ENCODE measurements at regions of chr4 and their contacts with region 1.

Region 1: GRCh38 chr4:48779998-48780742 is at the start of gene FRYL:
- DNase-seq: peak; percentile 87 to 99 (median 98)
- ATAC-seq: peak; percentile 92
- H3K4me3 ChIP-seq: peak within 1 kb of the TSS; percentile 80
- H3K4me3 Mint-ChIP-seq: peak within 1 kb of the TSS; percentile 76 to 96 (median 92)
- H3K27ac ChIP-seq: peak within 1 kb of the TSS; percentile 89
- H3K27ac Mint-ChIP-seq: peak within 1 kb of the TSS; percentile 76 to 96 (median 88)
- H3K4me1 ChIP-seq: peaks cover 18 to 23% of the 10 kb centered on the region in 2 donors
- H3K4me1 Mint-ChIP-seq: peaks cover 35 to 49% (median 46%) of the 10 kb centered on the region in 7 donors
- H3K27me3 ChIP-seq: no peaks in the 10 kb centered on the region
- H3K27me3 Mint-ChIP-seq: no peaks in the 10 kb centered on the region
- total RNA-seq, gene FRYL: 89.5 to 126 (median 112) TPM

Region 2: DNA sequence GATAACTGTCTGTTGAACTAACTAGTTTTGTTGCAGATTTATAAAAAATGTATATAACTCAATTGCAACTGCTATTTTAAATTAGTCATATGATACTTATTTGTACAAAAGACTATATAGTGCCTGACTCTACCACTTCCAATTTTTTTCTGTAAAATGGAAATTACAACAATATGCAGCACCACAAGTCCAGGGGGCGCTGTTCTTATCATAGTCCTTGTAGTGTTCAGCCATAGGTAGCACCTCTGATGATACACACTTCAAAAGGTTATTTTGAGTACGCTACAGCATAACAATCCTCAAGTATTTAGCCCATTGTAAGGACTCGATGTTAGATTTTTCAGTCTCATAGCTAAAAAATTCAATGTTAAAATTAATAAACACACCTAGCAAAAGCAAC is 1117.2 kb before region 1 on chr4:
- CTCF ChIA-PET with region 1: no interaction called
- POLR2A ChIA-PET with region 1: no interaction called
- intact Hi-C with region 1: no loop called
- DNase-seq: no peak
- ATAC-seq: no peak
- H3K4me3 ChIP-seq: no peak overlapping the region
- H3K4me3 Mint-ChIP-seq: no peak overlapping the region
- H3K27ac ChIP-seq: no peak overlapping the region
- H3K27ac Mint-ChIP-seq: no peak overlapping the region
- H3K4me1 ChIP-seq: no peaks in the 10 kb centered on the region
- H3K4me1 Mint-ChIP-seq: no peaks in the 10 kb centered on the region
- H3K27me3 ChIP-seq: no peaks in the 10 kb centered on the region
- H3K27me3 Mint-ChIP-seq: peaks cover 7 to 21% (median 17%) of the 10 kb centered on the region in 5 donors

Region 3: DNA sequence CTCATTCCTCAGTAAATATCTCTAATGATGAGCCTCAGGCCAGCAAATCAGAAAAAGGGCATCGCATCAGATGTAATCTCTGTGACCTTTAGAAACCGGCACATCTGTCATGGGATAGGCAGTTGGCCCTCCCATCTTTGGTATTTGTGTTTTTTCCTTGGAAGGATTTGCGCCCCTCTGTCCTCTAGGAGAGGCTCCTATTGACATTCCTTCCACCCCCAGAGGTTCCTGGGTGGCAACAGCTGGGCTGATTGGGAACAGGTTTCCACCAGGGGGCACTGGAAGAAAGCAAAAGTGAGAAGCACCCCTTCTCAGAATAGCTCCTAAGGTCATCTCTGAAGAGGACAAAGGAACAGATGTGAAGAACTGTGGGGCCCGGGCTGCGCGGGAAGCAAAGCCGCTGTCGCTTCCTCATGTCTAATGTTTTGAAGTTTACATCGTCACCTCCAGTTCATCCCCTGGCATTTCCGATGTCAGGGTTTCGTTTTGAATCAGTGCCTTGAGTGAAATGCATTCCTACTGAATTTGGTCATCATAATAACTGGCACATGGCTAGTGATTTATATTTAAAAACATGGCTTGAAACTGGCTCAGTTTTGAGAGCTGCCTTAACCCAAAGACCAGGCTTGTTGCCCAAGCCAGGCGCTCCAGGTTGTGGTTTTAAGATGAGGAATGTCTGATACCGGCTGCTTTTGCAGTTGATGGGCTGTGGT is 652.3 kb before region 1 on chr4:
- CTCF ChIA-PET with region 1: no interaction called
- POLR2A ChIA-PET with region 1: no interaction called
- intact Hi-C with region 1: loop called (anchors 2 kb)
- DNase-seq: peak; percentile 30 to 78 (median 71)
- ATAC-seq: peak; percentile 82
- H3K4me3 ChIP-seq: peak overlapping the region; percentile 52
- H3K4me3 Mint-ChIP-seq: peak overlapping the region in 9 of 10 donors; percentile 80 to 99 (median 91)
- H3K27ac ChIP-seq: peak overlapping the region; percentile 79
- H3K27ac Mint-ChIP-seq: peak overlapping the region in 7 of 9 donors; percentile 89 to 97 (median 95)
- H3K4me1 ChIP-seq: peaks cover 32 to 81% of the 10 kb centered on the region in 2 donors
- H3K4me1 Mint-ChIP-seq: peaks cover 0 to 89% (median 84%) of the 10 kb centered on the region in 7 donors
- H3K27me3 ChIP-seq: no peaks in the 10 kb centered on the region
- H3K27me3 Mint-ChIP-seq: no peaks in the 10 kb centered on the region

Region 4: DNA sequence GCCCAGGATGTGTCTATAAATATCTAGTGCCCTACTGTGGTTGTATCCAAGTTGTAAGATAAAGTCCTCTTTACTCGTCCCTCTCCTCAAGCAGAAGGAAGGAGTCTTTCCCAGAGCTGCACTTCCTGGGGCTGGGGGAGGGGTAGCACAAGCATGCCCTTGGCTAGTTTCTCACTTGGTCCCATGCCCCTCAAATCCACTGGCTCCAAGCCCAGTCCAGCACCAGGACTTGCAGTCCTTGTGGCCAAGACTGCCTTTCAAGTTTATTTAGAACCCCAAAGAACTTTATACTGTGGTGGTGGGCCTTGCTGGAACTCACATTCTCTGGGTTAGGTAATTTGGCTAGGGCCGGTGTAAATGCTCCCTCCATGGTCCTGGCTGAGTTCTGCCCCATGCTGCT is 340.2 kb before region 1 on chr4:
- CTCF ChIA-PET with region 1: no interaction called
- POLR2A ChIA-PET with region 1: no interaction called
- intact Hi-C with region 1: no loop called
- DNase-seq: no peak
- ATAC-seq: no peak
- H3K4me3 ChIP-seq: no peak overlapping the region
- H3K4me3 Mint-ChIP-seq: no peak overlapping the region
- H3K27ac ChIP-seq: no peak overlapping the region
- H3K27ac Mint-ChIP-seq: no peak overlapping the region
- H3K4me1 ChIP-seq: no peaks in the 10 kb centered on the region
- H3K4me1 Mint-ChIP-seq: peaks cover 0 to 4% (median 0%) of the 10 kb centered on the region in 7 donors
- H3K27me3 ChIP-seq: no peaks in the 10 kb centered on the region
- H3K27me3 Mint-ChIP-seq: peaks cover 3 to 15% (median 4%) of the 10 kb centered on the region in 5 donors

Region 5: GRCh38 chr4:48578132-48578968 is 201.8 kb before region 1 on chr4:
- CTCF ChIA-PET with region 1: interaction called, 23 read pairs
- POLR2A ChIA-PET with region 1: interaction called, 5 read pairs
- intact Hi-C with region 1: loop called (anchors 1 to 2 kb)
- DNase-seq: peak in 8 of 9 donors; percentile 29 to 66 (median 50)
- ATAC-seq: peak; percentile 95
- H3K4me3 ChIP-seq: no peak overlapping the region
- H3K4me3 Mint-ChIP-seq: no peak overlapping the region
- H3K27ac ChIP-seq: no peak overlapping the region
- H3K27ac Mint-ChIP-seq: peak overlapping the region in 6 of 9 donors; percentile 28 to 79 (median 52)
- H3K4me1 ChIP-seq: no peaks in the 10 kb centered on the region
- H3K4me1 Mint-ChIP-seq: peaks cover 0 to 7% (median 0%) of the 10 kb centered on the region in 7 donors
- H3K27me3 ChIP-seq: no peaks in the 10 kb centered on the region
- H3K27me3 Mint-ChIP-seq: no peaks in the 10 kb centered on the region

Region 6: GRCh38 chr4:48727666-48728459 is 52.3 kb before region 1 on chr4:
- CTCF ChIA-PET with region 1: no interaction called
- POLR2A ChIA-PET with region 1: interaction called, 4 read pairs
- intact Hi-C with region 1: loop called (anchors 2 kb)
- DNase-seq: no peak
- ATAC-seq: no peak
- H3K4me3 ChIP-seq: no peak overlapping the region
- H3K4me3 Mint-ChIP-seq: peak overlapping the region in 9 of 10 donors; percentile 2 to 79 (median 65)
- H3K27ac ChIP-seq: no peak overlapping the region
- H3K27ac Mint-ChIP-seq: peak overlapping the region in 8 of 9 donors; percentile 2 to 83 (median 27)
- H3K4me1 ChIP-seq: peaks cover 28 to 37% of the 10 kb centered on the region in 2 donors
- H3K4me1 Mint-ChIP-seq: peaks cover 71 to 96% (median 94%) of the 10 kb centered on the region in 7 donors
- H3K27me3 ChIP-seq: no peaks in the 10 kb centered on the region
- H3K27me3 Mint-ChIP-seq: no peaks in the 10 kb centered on the region

Region 7: DNA sequence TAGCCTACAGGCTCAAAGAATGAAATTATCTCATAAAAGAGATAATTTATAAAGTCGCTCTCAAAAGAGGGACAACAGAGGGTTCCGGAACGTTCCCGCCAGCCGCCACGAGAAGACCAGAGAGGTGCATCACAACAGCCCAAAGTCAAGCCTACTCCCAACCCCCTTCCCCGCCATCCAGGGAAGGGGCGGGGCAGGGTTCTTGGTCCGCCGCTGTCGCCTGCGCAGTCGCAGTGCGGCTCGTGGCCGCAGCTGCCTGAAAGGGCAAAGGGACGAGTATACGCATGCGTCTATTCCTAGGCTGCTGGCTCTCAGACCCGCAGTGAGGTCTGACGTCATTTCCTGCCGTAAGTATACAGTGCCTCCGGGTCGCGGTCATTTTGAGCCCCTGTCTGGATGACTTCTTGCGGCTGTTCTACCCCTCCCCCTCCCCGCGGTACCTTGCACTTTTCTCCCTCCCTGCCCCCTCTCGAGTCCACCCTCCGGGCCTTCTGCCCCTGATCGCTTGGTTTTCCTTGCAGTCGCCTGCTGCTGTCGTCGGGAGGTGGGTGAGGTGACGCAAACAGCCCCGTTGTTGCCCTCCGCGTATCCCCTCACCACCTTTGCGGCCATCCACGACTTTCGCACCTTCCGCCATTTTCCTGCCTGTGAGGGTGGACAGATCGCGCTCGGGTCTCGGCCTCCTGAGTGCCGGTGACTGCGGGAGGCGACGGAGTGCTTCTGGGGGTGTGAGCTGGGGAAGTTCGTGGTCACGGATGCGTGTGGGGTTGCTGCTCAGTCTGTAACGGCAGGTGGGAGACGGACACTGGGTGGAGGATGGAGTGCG is 50.7 kb after region 1 on chr4 and contains the start of gene OCIAD1:
- CTCF ChIA-PET with region 1: no interaction called
- POLR2A ChIA-PET with region 1: interaction called, 23 read pairs
- intact Hi-C with region 1: loop called (anchors 1 kb)
- DNase-seq: peak; percentile 80 to 98 (median 93)
- ATAC-seq: peak; percentile 98
- H3K4me3 ChIP-seq: peak within 1 kb of the TSS; percentile 98
- H3K4me3 Mint-ChIP-seq: peak within 1 kb of the TSS; percentile 96 to 100 (median 100)
- H3K27ac ChIP-seq: peak within 1 kb of the TSS; percentile 91
- H3K27ac Mint-ChIP-seq: peak within 1 kb of the TSS; percentile 98 to 100 (median 100)
- H3K4me1 ChIP-seq: peaks cover 10 to 12% of the 10 kb centered on the region in 2 donors
- H3K4me1 Mint-ChIP-seq: peaks cover 10 to 44% (median 36%) of the 10 kb centered on the region in 7 donors
- H3K27me3 ChIP-seq: no peaks in the 10 kb centered on the region
- H3K27me3 Mint-ChIP-seq: peaks cover 0 to 4% (median 4%) of the 10 kb centered on the region in 5 donors
- total RNA-seq, gene OCIAD1: 85.6 to 128 (median 102) TPM

Region 8: GRCh38 chr4:48963042-48963679 is 183.0 kb after region 1 on chr4:
- CTCF ChIA-PET with region 1: no interaction called
- POLR2A ChIA-PET with region 1: no interaction called
- intact Hi-C with region 1: loop called (anchors 1 kb)
- DNase-seq: peak; percentile 39 to 84 (median 74)
- ATAC-seq: peak; percentile 99
- H3K4me3 ChIP-seq: no peak overlapping the region
- H3K4me3 Mint-ChIP-seq: no peak overlapping the region
- H3K27ac ChIP-seq: no peak overlapping the region
- H3K27ac Mint-ChIP-seq: peak overlapping the region in 1 of 9 donors; percentile 59
- H3K4me1 ChIP-seq: no peaks in the 10 kb centered on the region
- H3K4me1 Mint-ChIP-seq: peaks cover 0 to 5% (median 3%) of the 10 kb centered on the region in 7 donors
- H3K27me3 ChIP-seq: no peaks in the 10 kb centered on the region
- H3K27me3 Mint-ChIP-seq: peaks cover 0 to 11% (median 0%) of the 10 kb centered on the region in 5 donors